K562 (cell line): ENCODE measurements at regions of chr19 and their contacts with region 1.

Region 1: DNA sequence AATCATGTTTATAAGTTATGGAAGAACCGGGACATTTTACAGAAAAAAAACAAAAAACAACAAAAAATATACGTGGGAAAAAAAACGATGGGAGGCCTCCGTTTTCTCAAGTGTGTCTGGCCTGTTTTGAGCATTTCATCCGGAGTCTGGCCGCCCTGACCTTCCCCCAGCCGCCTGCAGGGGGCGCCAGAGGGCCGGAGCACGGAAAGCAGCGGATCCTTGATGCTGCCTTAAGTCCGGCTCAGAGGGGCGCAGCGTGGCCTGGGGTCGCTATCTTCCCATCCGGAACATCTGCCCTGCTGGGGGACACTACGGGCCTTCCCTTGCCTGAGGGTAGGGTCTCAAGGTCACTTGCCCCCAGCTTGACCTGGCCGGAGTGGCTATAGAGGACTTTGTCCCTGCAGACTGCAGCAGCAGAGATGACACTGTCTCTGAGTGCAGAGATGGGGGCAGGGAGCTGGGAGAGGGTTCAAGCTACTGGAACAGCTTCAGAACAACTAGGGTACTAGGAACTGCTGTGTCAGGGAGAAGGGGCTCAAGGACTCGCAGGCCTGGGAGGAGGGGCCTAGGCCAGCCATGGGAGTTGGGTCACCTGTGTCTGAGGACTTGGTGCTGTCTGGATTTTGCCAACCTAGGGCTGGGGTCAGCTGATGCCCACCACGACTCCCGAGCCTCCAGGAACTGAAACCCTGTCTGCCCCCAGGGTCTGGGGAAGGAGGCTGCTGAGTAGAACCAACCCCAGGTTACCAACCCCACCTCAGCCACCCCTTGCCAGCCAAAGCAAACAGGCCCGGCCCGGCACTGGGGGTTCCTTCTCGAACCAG is 1.8 kb upstream of the APOE start:
- DNase-seq: peak; percentile 70 to 86 (median 74)
- ATAC-seq: peak; percentile 81
- H3K4me3 ChIP-seq: no peak overlapping the region
- H3K27ac ChIP-seq: peak overlapping the region; percentile 40
- H3K4me1 ChIP-seq: peaks cover 20 to 67% of the 10 kb centered on the region in 2 experiments; a peak in 4 of 5 replicates
- H3K27me3 ChIP-seq: no peaks in the 10 kb centered on the region
- CTCF ChIP-seq: peak; percentile 93 to 98 (median 94)
- EP300 ChIP-seq: no peak
- POLR2A ChIP-seq: peak; percentile 83
- RAD21 ChIP-seq: peak; percentile 92

Region 2: DNA sequence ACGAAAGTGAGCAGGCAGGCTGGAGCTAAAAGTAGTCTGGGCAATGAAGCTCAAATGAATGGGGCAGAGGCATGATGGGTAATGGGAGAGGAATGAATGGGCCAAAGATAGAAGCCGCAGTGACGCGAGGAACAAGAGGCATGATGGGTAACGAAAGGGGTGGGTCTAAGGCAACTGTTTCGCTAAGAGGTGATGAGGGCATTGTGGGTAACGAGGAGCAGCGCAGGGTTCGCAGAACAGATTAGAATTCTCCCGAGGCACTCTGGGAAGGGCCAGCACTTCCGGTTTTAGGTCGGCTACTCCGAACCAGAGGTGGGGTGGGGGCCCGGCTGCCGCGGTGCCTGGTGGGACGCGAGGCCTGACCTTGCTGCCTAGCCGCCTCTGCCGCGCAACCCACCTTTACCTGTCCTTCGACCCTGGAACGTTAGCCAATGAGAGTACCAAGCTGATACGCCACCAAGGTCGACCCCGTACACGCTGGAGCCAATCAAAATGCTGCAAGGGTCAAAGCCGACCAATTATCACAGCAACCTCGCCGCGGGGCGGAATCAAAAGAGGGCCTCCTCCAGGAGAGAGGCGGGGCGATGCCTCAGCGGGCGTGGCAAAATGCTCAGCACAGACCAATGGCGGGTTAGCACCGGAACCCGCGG is 13.3 kb before region 1 on chr19:
- CTCF ChIA-PET with region 1: no interaction called
- POLR2A ChIA-PET with region 1: interaction called, 11 read pairs
- in situ Hi-C with region 1: no loop called
- intact Hi-C with region 1: no loop called
- DNase-seq: peak; percentile 93 to 100 (median 96)
- ATAC-seq: peak; percentile 93
- H3K4me3 ChIP-seq: peak overlapping the region; percentile 46
- H3K27ac ChIP-seq: peak overlapping the region; percentile 96
- H3K4me1 ChIP-seq: peaks cover 17 to 33% of the 10 kb centered on the region in 2 experiments
- H3K27me3 ChIP-seq: no peaks in the 10 kb centered on the region
- CTCF ChIP-seq: no peak
- EP300 ChIP-seq: peak; percentile 46; the same call in 1 of the 2 replicates
- POLR2A ChIP-seq: peak; percentile 98
- RAD21 ChIP-seq: peak in 1 of 2 experiments; percentile 18; a peak in 1 of 4 replicates

Region 3: GRCh38 chr19:44954824-44955586 is 51.2 kb after region 1 on chr19 and contains the start of gene CLPTM1:
- CTCF ChIA-PET with region 1: interaction called, 27 read pairs
- POLR2A ChIA-PET with region 1: interaction called, 7 read pairs
- in situ Hi-C with region 1: no loop called
- intact Hi-C with region 1: loop called (anchors 1 kb)
- DNase-seq: peak; percentile 96 to 98 (median 97)
- ATAC-seq: peak; percentile 97
- H3K4me3 ChIP-seq: peak within 1 kb of the TSS; percentile 100
- H3K27ac ChIP-seq: peak within 1 kb of the TSS; percentile 90
- H3K4me1 ChIP-seq: peaks cover 16 to 31% of the 10 kb centered on the region in 2 experiments; a peak in 4 of 5 replicates
- H3K27me3 ChIP-seq: no peaks in the 10 kb centered on the region
- CTCF ChIP-seq: no peak; a peak in 1 of 6 replicates
- EP300 ChIP-seq: no peak
- POLR2A ChIP-seq: peak; percentile 98
- RAD21 ChIP-seq: no peak
- polyA plus RNA-seq, gene CLPTM1: 0.37 to 2.4 TPM